ENCODE measurements at regions of chr1 and their contacts with region 1.

Region 1: DNA sequence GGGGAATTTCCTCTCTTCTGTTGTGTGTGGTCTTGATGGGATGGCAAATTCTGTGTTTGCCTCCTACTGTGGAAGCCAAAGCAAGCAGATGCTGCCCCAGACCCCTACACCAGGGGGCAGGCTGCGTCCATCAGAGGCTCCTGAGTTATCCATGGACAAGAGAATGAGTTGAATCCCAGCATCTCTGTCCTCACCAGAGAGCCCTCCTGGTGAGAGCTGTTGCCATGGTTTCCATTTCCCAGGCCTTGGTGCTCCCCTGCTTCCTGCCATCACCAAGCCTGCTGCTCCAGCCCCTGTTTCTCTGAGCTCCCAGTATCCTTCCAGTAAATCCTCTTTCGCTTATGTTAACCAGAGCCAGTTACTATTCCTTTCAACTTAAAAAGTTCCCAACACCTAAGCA is 20.4 kb upstream of the GNG12 start:
- DNase-seq: peak in 1 of 2 donors; percentile 62
- ATAC-seq: peak; percentile 64

Region 2: GRCh38 chr1:67921725-67922489 is 68.2 kb after region 1 on chr1:
- intact Hi-C with region 1: no loop called
- DNase-seq: no peak
- ATAC-seq: no peak

Region 3: DNA sequence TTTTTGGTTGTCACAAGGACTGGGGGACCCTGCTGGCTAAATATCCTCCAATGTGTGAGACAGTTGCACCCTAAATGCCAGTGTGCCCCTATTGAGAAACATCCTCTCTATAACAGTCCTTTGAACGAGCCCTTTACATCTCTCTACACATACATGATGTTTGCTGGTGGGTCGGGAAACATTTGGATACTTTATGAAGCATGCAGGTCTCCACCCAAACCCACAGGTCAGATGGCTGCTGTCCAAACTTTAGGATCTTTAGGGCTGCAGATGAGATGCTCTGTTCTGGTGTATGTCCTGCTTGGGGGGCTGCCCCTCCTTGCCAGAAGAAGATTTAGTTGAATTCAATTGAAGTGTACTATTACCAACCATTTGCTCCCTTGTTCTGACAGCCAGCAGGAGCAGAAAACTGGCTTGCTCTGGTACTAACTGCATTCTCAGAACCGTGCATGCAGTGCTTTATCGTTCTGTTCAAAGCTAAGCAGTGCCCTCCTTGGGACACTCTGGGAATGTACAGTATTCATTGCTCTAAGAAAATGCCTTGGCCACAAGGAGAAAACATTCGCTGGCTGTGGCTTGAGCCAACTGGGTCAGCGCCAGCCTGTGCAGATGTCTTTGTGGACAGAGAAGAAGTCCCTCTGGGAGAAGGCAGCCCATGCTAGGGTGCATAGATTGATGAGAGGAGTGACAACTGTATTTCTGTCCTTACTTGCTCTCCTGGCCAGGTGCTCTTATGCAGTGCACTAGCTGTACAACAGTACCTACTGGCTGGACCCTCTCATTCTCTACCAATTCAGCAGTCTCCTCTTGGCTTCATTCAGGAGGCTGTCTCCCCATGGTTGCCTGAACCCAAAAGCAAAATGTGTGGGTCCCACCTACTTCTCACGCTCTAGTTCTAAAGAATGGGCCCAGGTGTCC is 258.1 kb after region 1 on chr1:
- intact Hi-C with region 1: loop called in 1 of 2 experiments (anchors 5 kb)
- DNase-seq: peak; percentile 54 to 65
- ATAC-seq: peak; percentile 97

Region 4: GRCh38 chr1:68346188-68346808 is 492.6 kb after region 1 on chr1:
- intact Hi-C with region 1: loop called in 1 of 2 experiments (anchors 10 kb)
- DNase-seq: no peak
- ATAC-seq: no peak

Measured in left colon (tissue), 2 donors.